ENCODE measurements at regions of chr20 and their contacts with region 1.

Region 1: DNA sequence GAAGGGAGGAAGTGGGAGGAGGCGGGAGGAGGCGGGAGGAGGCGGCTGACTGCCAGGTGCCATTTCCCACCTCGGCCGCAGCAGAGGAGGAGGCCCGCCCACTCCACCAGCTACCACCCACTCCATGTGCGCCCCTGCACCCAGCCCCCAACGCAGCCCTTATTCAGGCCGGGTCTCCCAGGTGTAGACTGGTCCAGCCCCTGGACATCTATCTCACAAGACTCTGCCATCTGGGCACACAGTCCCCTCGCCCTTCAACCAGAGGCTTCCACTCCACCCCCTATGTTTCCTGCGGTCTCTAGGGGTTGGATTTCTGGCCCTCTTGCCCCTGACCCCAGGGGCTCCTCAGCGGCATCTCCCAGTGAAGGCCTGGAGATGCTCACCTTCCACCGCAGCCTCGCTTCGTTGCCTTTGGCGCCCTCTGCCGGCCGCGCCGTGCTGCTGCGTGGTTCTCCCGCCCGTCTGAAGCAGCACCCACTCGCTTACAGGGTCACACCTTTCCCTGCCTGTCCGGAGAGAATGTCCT is 32.6 kb upstream of the FAM83D start:
- DNase-seq: peak; percentile 19
- ATAC-seq: peak; percentile 98
- H3K4me3 ChIP-seq: no peak overlapping the region
- H3K27ac ChIP-seq: no peak overlapping the region
- H3K4me1 ChIP-seq: peaks cover 5 to 17% of the 10 kb centered on the region in 2 experiments; a peak in 3 of 4 replicates
- H3K27me3 ChIP-seq: peaks cover 5% of the 10 kb centered on the region; the same call in 1 of the 2 replicates
- CTCF ChIP-seq: peak; percentile 77 to 94 (median 85)
- POLR2A ChIP-seq: no peak
- RAD21 ChIP-seq: peak; percentile 91

Region 2: DNA sequence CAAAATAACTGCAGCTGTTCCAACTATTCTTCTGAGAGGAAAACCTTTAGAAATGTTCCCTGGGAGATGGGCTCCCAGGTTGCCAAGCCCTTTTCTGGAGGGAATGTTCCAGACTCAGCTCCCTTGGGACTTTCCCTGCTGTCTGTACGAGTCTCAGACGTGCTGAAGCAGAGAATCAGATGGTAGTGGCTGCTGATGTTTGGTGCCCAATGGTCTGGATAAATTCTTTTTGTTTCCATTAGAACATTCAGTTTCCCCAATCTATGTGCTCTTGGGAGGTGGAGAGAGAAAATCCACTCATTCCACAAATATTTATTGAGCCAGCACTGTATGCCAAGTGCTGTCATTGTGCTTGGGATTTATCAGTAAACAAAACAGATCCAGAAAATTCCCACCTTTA is 498.5 kb before region 1 on chr20:
- CTCF ChIA-PET with region 1: no interaction called
- POLR2A ChIA-PET with region 1: no interaction called
- RAD21 ChIA-PET with region 1: no interaction called
- intact Hi-C with region 1: no loop called
- DNase-seq: no peak
- ATAC-seq: no peak
- H3K4me3 ChIP-seq: no peak overlapping the region
- H3K27ac ChIP-seq: no peak overlapping the region
- H3K4me1 ChIP-seq: no peaks in the 10 kb centered on the region
- H3K27me3 ChIP-seq: no peaks in the 10 kb centered on the region
- CTCF ChIP-seq: no peak
- POLR2A ChIP-seq: no peak
- RAD21 ChIP-seq: no peak

Region 3: GRCh38 chr20:38514185-38514584 is 379.4 kb before region 1 on chr20:
- CTCF ChIA-PET with region 1: no interaction called
- POLR2A ChIA-PET with region 1: no interaction called
- RAD21 ChIA-PET with region 1: no interaction called
- intact Hi-C with region 1: no loop called
- DNase-seq: no peak
- ATAC-seq: no peak
- H3K4me3 ChIP-seq: no peak overlapping the region
- H3K27ac ChIP-seq: no peak overlapping the region
- H3K4me1 ChIP-seq: no peaks in the 10 kb centered on the region
- H3K27me3 ChIP-seq: no peaks in the 10 kb centered on the region
- CTCF ChIP-seq: no peak
- POLR2A ChIP-seq: no peak
- RAD21 ChIP-seq: no peak

Region 4: GRCh38 chr20:38764567-38765355 is 128.9 kb before region 1 on chr20:
- CTCF ChIA-PET with region 1: no interaction called
- POLR2A ChIA-PET with region 1: no interaction called
- RAD21 ChIA-PET with region 1: no interaction called
- intact Hi-C with region 1: loop called (anchors 1 kb)
- DNase-seq: peak; percentile 87
- ATAC-seq: peak; percentile 98
- H3K4me3 ChIP-seq: peak overlapping the region in 1 of 2 experiments; percentile 38; a peak in 2 of 4 replicates
- H3K27ac ChIP-seq: peak overlapping the region; percentile 86
- H3K4me1 ChIP-seq: peaks cover 40 to 58% of the 10 kb centered on the region in 2 experiments
- H3K27me3 ChIP-seq: no peaks in the 10 kb centered on the region
- CTCF ChIP-seq: no peak
- POLR2A ChIP-seq: no peak
- RAD21 ChIP-seq: peak; percentile 25; the same call in 1 of the 2 replicates

Measured in HCT116 (cell line).